Gastrocnemius medialis (tissue), 4 donors: ENCODE measurements at regions of chr13 and their contacts with region 1.

Region 1: DNA sequence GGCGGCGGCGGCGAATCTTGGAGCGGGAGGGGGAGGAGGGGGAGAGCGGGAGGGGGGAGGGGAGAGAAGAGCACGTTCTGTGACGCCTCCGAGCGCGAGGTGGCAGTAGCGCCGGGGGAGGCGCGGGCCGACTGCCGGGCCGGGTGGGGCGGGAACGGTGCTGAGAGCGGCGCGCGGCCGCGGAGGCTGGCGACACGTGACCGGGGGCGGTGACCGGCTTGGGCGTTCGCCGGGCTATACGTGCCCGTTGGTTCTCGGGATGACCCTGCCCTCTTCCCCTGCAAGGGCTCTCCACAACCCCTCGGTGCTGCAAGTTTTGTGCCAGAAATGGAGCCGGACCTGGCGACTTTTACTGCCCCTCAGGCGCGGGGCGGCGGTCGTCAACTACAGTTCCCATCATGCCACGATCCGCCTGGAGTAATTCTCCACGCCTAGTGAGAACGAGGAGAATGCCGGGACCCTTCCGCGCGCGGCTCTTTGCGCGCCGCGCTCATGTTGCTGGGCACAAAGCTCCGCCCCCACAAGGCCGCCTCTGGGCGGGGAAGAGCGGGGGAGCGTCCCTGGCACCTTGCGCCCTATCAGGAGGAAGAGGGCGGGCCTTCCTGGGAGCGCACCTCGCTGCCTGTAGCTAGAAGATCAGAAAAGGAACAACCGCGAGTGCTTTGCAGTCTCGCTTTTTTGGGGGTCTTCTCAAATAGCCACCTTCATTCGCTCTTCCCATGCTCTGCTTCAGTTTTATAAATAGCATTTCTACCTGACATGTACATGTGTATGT is at the start of gene KPNA3:
- DNase-seq: peak; percentile 93 to 96
- ATAC-seq: peak; percentile 82 to 83
- H3K4me3 ChIP-seq: peak within 1 kb of the TSS; percentile 73 to 91 (median 76)
- H3K27ac ChIP-seq: peak within 1 kb of the TSS; percentile 92 to 98 (median 94)
- H3K4me1 ChIP-seq: peaks cover 32 to 36% of the 10 kb centered on the region in 2 donors
- H3K27me3 ChIP-seq: no peaks in the 10 kb centered on the region
- CTCF ChIP-seq: peak in 2 of 5 experiments; percentile 18 to 24
- POLR2A ChIP-seq: peak; percentile 66 to 89
- total RNA-seq, gene KPNA3: 73.3 to 154 (median 113) TPM

Region 2: GRCh38 chr13:48571126-48571913 is 1221.4 kb before region 1 on chr13:
- in situ Hi-C with region 1: no loop called
- intact Hi-C with region 1: loop called (anchors 5 kb)
- DNase-seq: peak; percentile 49 to 54
- ATAC-seq: peak; percentile 81 to 88
- H3K4me3 ChIP-seq: peak overlapping the region; percentile 28 to 46 (median 38)
- H3K27ac ChIP-seq: peak overlapping the region; percentile 82 to 86 (median 86)
- H3K4me1 ChIP-seq: peaks cover 41 to 55% of the 10 kb centered on the region in 2 donors
- H3K27me3 ChIP-seq: no peaks in the 10 kb centered on the region
- CTCF ChIP-seq: no peak
- POLR2A ChIP-seq: no peak

Region 3: GRCh38 chr13:49652355-49653305 is 140.1 kb before region 1 on chr13:
- in situ Hi-C with region 1: no loop called
- intact Hi-C with region 1: loop called (anchors 1 kb)
- DNase-seq: peak; percentile 87 to 95
- ATAC-seq: peak; percentile 59 to 71
- H3K4me3 ChIP-seq: peak overlapping the region in 3 of 4 donors; percentile 25 to 38 (median 30)
- H3K27ac ChIP-seq: peak overlapping the region; percentile 95 to 98 (median 96)
- H3K4me1 ChIP-seq: peaks cover 80 to 81% of the 10 kb centered on the region in 2 donors
- H3K27me3 ChIP-seq: no peaks in the 10 kb centered on the region
- CTCF ChIP-seq: peak; percentile 61 to 78 (median 71)
- POLR2A ChIP-seq: no peak

Region 4: DNA sequence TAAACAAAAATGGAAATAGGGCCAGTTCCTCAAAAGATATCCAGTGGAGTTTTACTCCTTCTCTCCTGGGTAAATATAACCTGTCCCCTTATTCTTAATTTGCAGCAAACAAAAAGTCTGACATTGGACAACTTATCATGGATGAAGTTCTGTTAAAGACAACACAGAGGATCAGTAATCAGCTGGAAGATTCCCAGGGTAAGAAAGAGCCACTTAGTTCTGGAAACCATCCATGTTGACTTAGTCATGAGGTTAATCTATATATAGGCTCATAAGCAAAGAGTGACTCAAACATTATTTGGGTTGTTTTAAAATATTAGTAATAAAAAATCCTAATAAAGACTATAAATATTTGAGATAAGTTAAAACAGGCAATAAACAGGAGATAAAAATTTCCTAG is 61.0 kb before region 1 on chr13:
- in situ Hi-C with region 1: no loop called
- intact Hi-C with region 1: loop called (anchors 2 kb)
- DNase-seq: no peak
- ATAC-seq: peak; percentile 73 to 79
- H3K4me3 ChIP-seq: no peak overlapping the region
- H3K27ac ChIP-seq: peak overlapping the region; percentile 66 to 86 (median 72)
- H3K4me1 ChIP-seq: peaks cover 23 to 32% of the 10 kb centered on the region in 2 donors
- H3K27me3 ChIP-seq: no peaks in the 10 kb centered on the region
- CTCF ChIP-seq: no peak
- POLR2A ChIP-seq: no peak

Region 5: GRCh38 chr13:49936085-49936940 is 143.6 kb after region 1 on chr13 and contains the start of gene SPRYD7:
- in situ Hi-C with region 1: no loop called
- intact Hi-C with region 1: loop called (anchors 2 kb)
- DNase-seq: peak; percentile 96 to 98
- ATAC-seq: peak; percentile 92 to 93
- H3K4me3 ChIP-seq: peak within 1 kb of the TSS; percentile 80 to 98 (median 88)
- H3K27ac ChIP-seq: peak within 1 kb of the TSS; percentile 87 to 95 (median 92)
- H3K4me1 ChIP-seq: peaks cover 49 to 54% of the 10 kb centered on the region in 2 donors
- H3K27me3 ChIP-seq: no peaks in the 10 kb centered on the region
- CTCF ChIP-seq: peak; percentile 88 to 95 (median 93)
- POLR2A ChIP-seq: peak; percentile 77 to 83
- total RNA-seq, gene SPRYD7: 9.8 to 24.7 (median 17.9) TPM

Region 6: DNA sequence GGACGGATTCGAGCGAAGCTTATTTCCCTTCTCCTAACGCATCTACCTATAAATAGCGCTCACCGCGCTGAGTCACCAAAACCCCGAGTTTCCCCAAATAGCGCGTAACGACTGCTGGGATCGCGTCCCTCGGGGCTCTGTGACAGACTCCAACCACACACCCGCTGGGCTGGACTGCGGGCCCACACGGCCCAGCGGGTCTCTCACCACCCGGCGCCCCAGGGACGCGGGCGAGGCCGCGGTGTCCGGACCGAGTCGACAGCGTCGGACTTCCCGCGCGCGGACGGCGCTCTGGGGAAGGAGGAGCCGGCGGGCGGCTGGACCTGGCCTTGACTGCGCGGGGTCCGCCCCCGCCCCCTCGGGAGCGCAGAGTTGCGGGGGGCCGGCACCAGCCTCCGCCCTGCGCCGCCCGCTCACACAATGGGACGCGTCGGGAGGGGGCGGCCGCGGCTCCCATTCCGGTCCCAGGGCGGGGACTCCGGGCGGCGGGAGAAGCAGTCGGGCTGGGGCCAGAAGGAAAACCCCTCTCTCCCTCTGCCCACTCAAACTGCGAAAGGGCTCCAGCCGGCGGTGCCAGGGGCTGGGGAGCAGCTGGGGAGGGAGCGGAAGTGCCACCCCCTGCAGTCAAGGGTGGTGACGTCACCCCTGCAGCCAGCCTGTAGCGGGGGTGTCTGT is 331.3 kb after region 1 on chr13:
- in situ Hi-C with region 1: no loop called
- intact Hi-C with region 1: loop called (anchors 5 kb)
- DNase-seq: peak; percentile 90 to 99
- ATAC-seq: peak; percentile 68 to 70
- H3K4me3 ChIP-seq: peak overlapping the region; percentile 84 to 99 (median 90)
- H3K27ac ChIP-seq: peak overlapping the region; percentile 98 to 100 (median 99)
- H3K4me1 ChIP-seq: peaks cover 48 to 49% of the 10 kb centered on the region in 2 donors
- H3K27me3 ChIP-seq: no peaks in the 10 kb centered on the region
- CTCF ChIP-seq: peak in 1 of 5 experiments; percentile 36
- POLR2A ChIP-seq: peak; percentile 97